ENCODE measurements at regions of chrX and their contacts with region 1.

Region 1: GRCh38 chrX:69424161-69424560 is 80.0 kb upstream of the NALF2 start:
- DNase-seq: peak; percentile 22
- ATAC-seq: no peak
- H3K4me3 ChIP-seq: no peak overlapping the region
- H3K27ac ChIP-seq: no peak overlapping the region
- H3K4me1 ChIP-seq: no peaks in the 10 kb centered on the region
- H3K27me3 ChIP-seq: peaks cover 13% of the 10 kb centered on the region; the same call in 1 of the 2 replicates
- CTCF ChIP-seq: peak; percentile 42

Region 2: DNA sequence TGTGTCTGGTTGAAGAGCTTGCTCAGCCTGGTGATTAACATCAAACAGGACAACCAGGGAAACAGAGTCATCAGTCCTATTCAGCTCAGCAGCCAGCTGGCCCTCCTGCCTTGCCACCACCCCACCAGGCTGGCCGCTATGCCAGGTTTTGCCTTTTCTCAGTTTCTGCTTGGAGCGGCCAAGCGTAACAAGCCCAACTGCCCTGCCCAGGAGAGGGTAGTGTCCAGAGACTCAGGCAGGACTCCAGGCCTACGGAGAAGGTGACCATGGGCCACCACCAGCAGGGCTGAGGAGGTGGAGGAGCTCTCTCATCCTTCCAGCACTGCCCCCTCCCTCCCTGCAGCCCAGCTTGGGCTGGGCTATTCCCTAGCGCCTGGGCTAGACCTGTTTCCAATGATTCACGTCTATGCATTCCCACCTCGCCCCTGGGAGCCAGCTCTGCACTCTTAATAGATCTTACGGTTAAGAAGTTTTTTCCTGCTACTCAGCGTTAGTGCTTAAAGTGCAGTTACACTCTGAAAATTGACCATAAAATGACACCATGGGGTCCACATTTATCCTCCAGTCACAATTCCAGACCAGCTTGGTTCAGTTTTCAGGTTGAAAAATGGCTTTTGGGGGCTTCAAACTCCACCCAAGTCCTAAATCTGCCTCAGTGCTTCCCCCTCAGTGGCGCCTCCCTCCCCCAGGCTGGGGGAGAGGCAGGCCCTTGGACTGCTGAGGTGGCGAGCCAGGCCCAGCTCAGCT is 134.9 kb before region 1 on chrX:
- CTCF ChIA-PET with region 1: no interaction called
- POLR2A ChIA-PET with region 1: no interaction called
- intact Hi-C with region 1: no loop called
- DNase-seq: no peak
- ATAC-seq: no peak
- H3K4me3 ChIP-seq: no peak overlapping the region
- H3K27ac ChIP-seq: no peak overlapping the region
- H3K4me1 ChIP-seq: no peaks in the 10 kb centered on the region
- H3K27me3 ChIP-seq: no peaks in the 10 kb centered on the region
- CTCF ChIP-seq: no peak

Region 3: GRCh38 chrX:69503782-69504625 is 79.8 kb after region 1 on chrX and contains the start of gene NALF2:
- CTCF ChIA-PET with region 1: no interaction called
- POLR2A ChIA-PET with region 1: no interaction called
- intact Hi-C with region 1: no loop called
- DNase-seq: peak; percentile 50
- ATAC-seq: peak; percentile 69
- H3K4me3 ChIP-seq: no peak within 1 kb of the TSS
- H3K27ac ChIP-seq: no peak within 1 kb of the TSS
- H3K4me1 ChIP-seq: no peaks in the 10 kb centered on the region
- H3K27me3 ChIP-seq: peaks cover 24% of the 10 kb centered on the region
- CTCF ChIP-seq: no peak
- total RNA-seq, gene NALF2: not detected in 2 replicates

Region 4: DNA sequence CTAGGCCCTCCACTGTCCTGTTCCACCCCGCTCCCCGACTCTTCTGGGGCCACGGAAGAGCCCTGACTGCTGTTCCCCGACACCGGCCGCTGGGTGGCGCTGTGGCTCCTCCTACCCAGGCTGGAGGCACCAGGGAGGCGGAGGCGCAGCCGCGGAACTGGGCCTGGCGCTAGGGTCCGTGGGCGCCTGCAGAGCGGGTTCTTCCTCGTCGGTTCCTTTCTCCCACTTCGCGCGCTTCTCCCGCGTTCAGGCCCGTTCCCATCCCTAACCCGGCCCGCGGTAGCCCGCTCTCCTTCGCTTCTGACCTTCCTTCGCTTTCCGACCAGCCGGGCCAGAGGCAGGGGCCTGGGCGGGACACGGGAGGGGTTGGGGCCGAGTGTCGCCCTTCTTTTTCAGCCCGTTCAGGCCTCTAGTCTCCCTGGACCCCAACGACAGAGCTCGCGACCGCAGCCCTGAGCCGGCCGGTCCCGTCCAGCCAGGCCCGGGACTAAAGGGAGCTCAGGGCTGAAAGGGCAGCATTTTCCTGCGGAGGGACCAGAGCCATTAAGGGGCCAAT is 114.2 kb after region 1 on chrX:
- CTCF ChIA-PET with region 1: no interaction called
- POLR2A ChIA-PET with region 1: no interaction called
- intact Hi-C with region 1: no loop called
- DNase-seq: peak; percentile 58
- ATAC-seq: peak; percentile 97
- H3K4me3 ChIP-seq: peak overlapping the region; percentile 63
- H3K27ac ChIP-seq: no peak overlapping the region
- H3K4me1 ChIP-seq: no peaks in the 10 kb centered on the region
- H3K27me3 ChIP-seq: 0 out of 2 replicates have a peak, but pooled peaks cover 4% of the 10 kb centered on the region
- CTCF ChIP-seq: peak; percentile 81

Region 5: GRCh38 chrX:69674891-69675290 is 250.7 kb after region 1 on chrX:
- CTCF ChIA-PET with region 1: no interaction called
- POLR2A ChIA-PET with region 1: no interaction called
- intact Hi-C with region 1: no loop called
- DNase-seq: no peak
- ATAC-seq: no peak
- H3K4me3 ChIP-seq: no peak overlapping the region
- H3K27ac ChIP-seq: no peak overlapping the region
- H3K4me1 ChIP-seq: no peaks in the 10 kb centered on the region
- H3K27me3 ChIP-seq: no peaks in the 10 kb centered on the region
- CTCF ChIP-seq: no peak

Region 6: GRCh38 chrX:70096052-70096451 is 671.9 kb after region 1 on chrX:
- CTCF ChIA-PET with region 1: no interaction called
- POLR2A ChIA-PET with region 1: no interaction called
- intact Hi-C with region 1: loop called (anchors 10 kb)
- DNase-seq: peak; percentile 56
- ATAC-seq: peak; percentile 89
- H3K4me3 ChIP-seq: no peak overlapping the region
- H3K27ac ChIP-seq: no peak overlapping the region
- H3K4me1 ChIP-seq: no peaks in the 10 kb centered on the region
- H3K27me3 ChIP-seq: no peaks in the 10 kb centered on the region
- CTCF ChIP-seq: peak; percentile 74